Activated CD4-positive, alpha-beta T cell treated with anti-CD3 and anti-CD28 coated beads, Interleukin-2, amount 10 ng/mL, durations not matched to agents 24 days and 14 days (primary cell): ENCODE measurements at regions of chr3 and their contacts with region 1.

Region 1: DNA sequence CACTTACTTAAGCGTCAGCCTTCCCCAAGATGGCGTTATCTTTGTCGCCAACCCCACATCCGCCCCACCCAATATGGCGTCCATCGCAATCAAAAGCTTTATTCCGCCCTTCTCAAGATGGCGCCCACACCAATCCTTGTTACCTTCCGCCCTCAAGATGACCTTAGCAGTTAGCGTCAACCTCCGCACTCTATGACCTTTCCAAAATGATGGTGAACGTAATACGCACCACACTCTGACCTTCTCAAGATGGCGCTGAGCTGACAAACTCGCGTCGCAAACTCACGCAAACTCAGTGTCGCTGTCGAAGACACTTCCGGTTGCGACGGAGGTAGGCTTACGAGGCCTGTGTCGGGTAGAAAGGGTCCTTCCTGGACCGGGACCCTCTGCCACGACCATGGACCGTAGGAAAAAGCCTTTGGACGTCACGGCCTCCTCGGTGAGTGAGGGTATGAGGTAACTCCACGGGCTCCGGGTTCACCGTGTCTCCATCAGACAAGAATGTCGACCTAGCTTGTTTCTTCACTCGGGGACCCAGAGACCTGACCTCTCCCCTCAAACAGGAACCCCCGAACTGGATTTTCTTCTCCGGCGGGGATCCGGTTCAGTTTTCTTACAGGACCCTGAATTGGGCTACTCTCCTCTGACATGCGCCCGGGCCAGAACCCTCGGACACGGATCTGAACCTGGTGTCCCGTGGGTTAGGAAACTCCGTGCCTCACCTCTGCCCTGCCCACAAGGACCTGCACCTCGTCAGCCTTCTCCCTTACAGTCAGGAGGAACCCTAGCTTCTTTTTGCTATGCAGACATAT is at the start of gene CCDC174:
- DNase-seq: peak; percentile 99
- H3K4me3 Mint-ChIP-seq: peak within 1 kb of the TSS; percentile 100
- H3K27ac Mint-ChIP-seq: peak within 1 kb of the TSS; percentile 95
- H3K4me1 Mint-ChIP-seq: peaks cover 38% of the 10 kb centered on the region
- H3K27me3 Mint-ChIP-seq: peaks cover 3% of the 10 kb centered on the region
- total RNA-seq, gene CCDC174: 16.0 and 16.8 TPM in 2 replicates

Region 2: DNA sequence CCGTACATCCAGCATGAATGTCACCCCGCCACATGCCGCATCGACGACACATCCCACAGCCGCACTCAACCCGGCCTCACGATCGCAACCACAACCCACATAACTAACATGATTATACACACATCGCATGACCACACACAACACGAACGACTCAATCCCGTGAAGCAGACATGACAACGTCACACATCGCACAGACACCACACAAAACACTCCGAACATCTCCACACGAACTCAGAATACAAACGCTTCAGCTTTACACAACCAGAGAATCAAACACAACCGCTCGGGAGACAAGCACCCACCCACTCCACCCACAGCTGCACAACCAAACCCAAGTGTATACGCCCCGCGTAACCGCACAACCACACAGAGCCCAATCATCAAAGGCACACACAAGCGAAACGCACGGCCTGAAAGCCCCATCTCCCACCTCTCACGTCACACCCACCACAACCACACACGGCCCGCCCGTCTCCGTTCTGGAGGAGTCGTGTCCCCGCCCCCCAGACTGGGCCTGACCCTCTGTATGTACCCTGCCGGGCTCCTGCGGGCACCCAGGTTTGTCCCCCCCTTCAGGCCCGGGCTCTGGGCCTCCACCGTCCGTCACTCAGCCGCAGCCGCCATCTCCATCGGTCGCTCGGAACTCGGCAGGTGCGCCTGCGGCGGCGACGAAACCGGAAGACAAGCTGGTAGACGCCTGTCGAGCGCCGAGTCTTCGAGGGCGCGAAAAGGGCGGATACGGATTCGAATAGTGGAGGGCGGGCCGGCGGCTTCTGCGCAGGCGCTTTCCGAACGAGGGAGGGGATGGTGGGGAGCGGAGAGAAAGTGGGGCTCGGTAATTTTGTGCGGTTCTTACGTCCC is 447.1 kb after region 1 on chr3 and contains the start of gene RBSN:
- intact Hi-C with region 1: loop called (anchors 2 kb)
- DNase-seq: peak; percentile 99
- H3K4me3 Mint-ChIP-seq: peak within 1 kb of the TSS; percentile 90
- H3K27ac Mint-ChIP-seq: peak within 1 kb of the TSS; percentile 93
- H3K4me1 Mint-ChIP-seq: peaks cover 29% of the 10 kb centered on the region
- H3K27me3 Mint-ChIP-seq: no peaks in the 10 kb centered on the region
- total RNA-seq, gene RBSN: 13.2 and 15.0 TPM in 2 replicates